Caco-2 (cell line): ENCODE measurements at regions of chr12 and their contacts with region 1.

Region 1: GRCh38 chr12:24255920-24256665 is 306.6 kb upstream of the SOX5 start:
- DNase-seq: peak; percentile 47 to 61
- H3K4me3 ChIP-seq: 0 out of 2 replicates have a peak overlapping the region, but pooled peaks have one; percentile 3
- H3K4me3 Mint-ChIP-seq: peak overlapping the region; percentile 17
- H3K27ac Mint-ChIP-seq: peak overlapping the region; percentile 54
- H3K4me1 ChIP-seq: peaks cover 22% of the 10 kb centered on the region
- H3K4me1 Mint-ChIP-seq: peaks cover 21% of the 10 kb centered on the region
- H3K27me3 ChIP-seq: no peaks in the 10 kb centered on the region
- H3K27me3 Mint-ChIP-seq: no peaks in the 10 kb centered on the region
- CTCF ChIP-seq: no peak

Region 2: GRCh38 chr12:24078318-24078765 is 177.8 kb before region 1 on chr12:
- CTCF ChIA-PET with region 1: no interaction called
- POLR2A ChIA-PET with region 1: no interaction called
- intact Hi-C with region 1: loop called (anchors 1 kb)
- DNase-seq: peak; percentile 86 to 88
- H3K4me3 ChIP-seq: no peak overlapping the region
- H3K4me3 Mint-ChIP-seq: peak overlapping the region; percentile 53
- H3K27ac Mint-ChIP-seq: peak overlapping the region; percentile 18
- H3K4me1 ChIP-seq: peaks cover 55% of the 10 kb centered on the region
- H3K4me1 Mint-ChIP-seq: peaks cover 50% of the 10 kb centered on the region
- H3K27me3 ChIP-seq: no peaks in the 10 kb centered on the region
- H3K27me3 Mint-ChIP-seq: no peaks in the 10 kb centered on the region
- CTCF ChIP-seq: no peak

Region 3: DNA sequence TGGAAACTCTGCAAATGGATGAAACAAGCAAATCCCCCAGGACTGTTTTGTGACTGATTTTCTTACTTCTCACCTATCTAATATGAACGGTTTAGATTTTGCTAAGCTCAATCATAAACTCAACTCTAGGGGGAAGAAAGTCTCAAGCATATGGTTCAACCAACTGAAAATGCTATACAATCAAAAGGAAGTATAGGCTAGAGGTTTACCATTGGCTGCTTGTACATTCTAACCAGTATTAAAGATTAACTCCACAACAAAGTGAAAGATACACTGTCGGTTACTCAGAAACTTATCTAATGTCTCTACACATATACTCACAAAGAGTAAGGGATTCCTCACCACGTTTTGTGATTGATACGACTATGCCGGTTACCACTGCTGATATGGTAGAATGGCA is 24.8 kb before region 1 on chr12:
- CTCF ChIA-PET with region 1: no interaction called
- POLR2A ChIA-PET with region 1: no interaction called
- intact Hi-C with region 1: loop called (anchors 2 kb)
- DNase-seq: no peak
- H3K4me3 ChIP-seq: no peak overlapping the region
- H3K4me3 Mint-ChIP-seq: no peak overlapping the region
- H3K27ac Mint-ChIP-seq: no peak overlapping the region
- H3K4me1 ChIP-seq: peaks cover 7% of the 10 kb centered on the region; the same call in 1 of the 2 replicates
- H3K4me1 Mint-ChIP-seq: no peaks in the 10 kb centered on the region
- H3K27me3 ChIP-seq: no peaks in the 10 kb centered on the region
- H3K27me3 Mint-ChIP-seq: no peaks in the 10 kb centered on the region
- CTCF ChIP-seq: no peak

Region 4: DNA sequence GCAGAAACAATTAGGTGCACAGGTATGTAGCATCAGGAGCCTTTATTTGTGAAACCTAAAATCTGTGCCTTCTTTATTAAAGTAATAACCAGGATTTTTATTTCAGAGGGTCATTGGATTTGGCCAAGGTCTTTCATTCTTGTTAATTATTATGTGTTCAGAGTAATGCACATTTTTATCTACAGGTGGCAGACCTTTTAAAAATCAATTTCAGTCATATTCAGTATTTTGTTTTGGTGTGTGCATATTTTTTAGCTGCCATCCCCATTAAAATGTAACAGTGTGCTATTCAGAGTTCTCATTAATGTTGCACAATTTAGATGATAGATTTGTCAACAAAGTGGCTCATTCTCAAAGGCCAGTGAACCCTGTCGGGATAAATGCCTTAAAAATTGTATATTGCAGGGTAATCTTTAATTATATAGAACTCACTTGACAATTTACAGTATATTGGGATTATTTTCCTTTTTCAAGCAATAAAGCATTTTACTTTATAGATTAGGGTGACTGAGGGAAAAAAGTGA is 12.6 kb after region 1 on chr12:
- CTCF ChIA-PET with region 1: no interaction called
- POLR2A ChIA-PET with region 1: no interaction called
- intact Hi-C with region 1: loop called (anchors 2 kb)
- DNase-seq: no peak
- H3K4me3 ChIP-seq: no peak overlapping the region
- H3K4me3 Mint-ChIP-seq: no peak overlapping the region
- H3K27ac Mint-ChIP-seq: no peak overlapping the region
- H3K4me1 ChIP-seq: 0 out of 2 replicates have a peak, but pooled peaks cover 5% of the 10 kb centered on the region
- H3K4me1 Mint-ChIP-seq: no peaks in the 10 kb centered on the region
- H3K27me3 ChIP-seq: no peaks in the 10 kb centered on the region
- H3K27me3 Mint-ChIP-seq: no peaks in the 10 kb centered on the region
- CTCF ChIP-seq: peak; percentile 1 to 53

Region 5: GRCh38 chr12:24360907-24361306 is 104.8 kb after region 1 on chr12:
- CTCF ChIA-PET with region 1: no interaction called
- POLR2A ChIA-PET with region 1: no interaction called
- intact Hi-C with region 1: no loop called
- DNase-seq: no peak
- H3K4me3 ChIP-seq: no peak overlapping the region
- H3K4me3 Mint-ChIP-seq: no peak overlapping the region
- H3K27ac Mint-ChIP-seq: no peak overlapping the region
- H3K4me1 ChIP-seq: peaks cover 2% of the 10 kb centered on the region; the same call in 1 of the 2 replicates
- H3K4me1 Mint-ChIP-seq: peaks cover 13% of the 10 kb centered on the region
- H3K27me3 ChIP-seq: no peaks in the 10 kb centered on the region
- H3K27me3 Mint-ChIP-seq: no peaks in the 10 kb centered on the region
- CTCF ChIP-seq: no peak

Region 6: GRCh38 chr12:25130741-25131188 is 874.7 kb after region 1 on chr12:
- CTCF ChIA-PET with region 1: no interaction called
- POLR2A ChIA-PET with region 1: no interaction called
- intact Hi-C with region 1: no loop called
- DNase-seq: peak in 1 of 2 experiments; percentile 52
- H3K4me3 ChIP-seq: no peak overlapping the region
- H3K4me3 Mint-ChIP-seq: no peak overlapping the region
- H3K27ac Mint-ChIP-seq: no peak overlapping the region
- H3K4me1 ChIP-seq: peaks cover 26% of the 10 kb centered on the region
- H3K4me1 Mint-ChIP-seq: peaks cover 32% of the 10 kb centered on the region
- H3K27me3 ChIP-seq: no peaks in the 10 kb centered on the region
- H3K27me3 Mint-ChIP-seq: no peaks in the 10 kb centered on the region
- CTCF ChIP-seq: peak; percentile 63 to 84